ENCODE measurements at regions of chr19 and their contacts with region 1.

Region 1: GRCh38 chr19:5665796-5666513 is 14.4 kb downstream of the MICOS13 start:
- DNase-seq: peak in 2 of 7 donors; percentile 69 to 77
- H3K4me3 ChIP-seq: no peak overlapping the region
- H3K27ac ChIP-seq: peak overlapping the region in 3 of 5 donors; percentile 17 to 40 (median 24)
- H3K4me1 ChIP-seq: peaks cover 0 to 9% of the 10 kb centered on the region in 2 donors
- H3K27me3 ChIP-seq: no peaks in the 10 kb centered on the region
- CTCF ChIP-seq: peak in 5 of 6 experiments; percentile 8 to 42 (median 31)
- POLR2A ChIP-seq: no peak

Region 2: GRCh38 chr19:5615756-5616332 is 50.1 kb before region 1 on chr19:
- intact Hi-C with region 1: loop called in 1 of 2 experiments (anchors 10 kb)
- DNase-seq: no peak
- H3K4me3 ChIP-seq: no peak overlapping the region
- H3K27ac ChIP-seq: no peak overlapping the region
- H3K4me1 ChIP-seq: peaks cover 6 to 26% of the 10 kb centered on the region in 2 donors
- H3K27me3 ChIP-seq: no peaks in the 10 kb centered on the region
- CTCF ChIP-seq: no peak
- POLR2A ChIP-seq: no peak

Region 3: GRCh38 chr19:5719961-5720790 is 54.2 kb after region 1 on chr19 and contains the starts of genes CATSPERD and LONP1:
- intact Hi-C with region 1: no loop called
- DNase-seq: peak; percentile 98 to 99 (median 99)
- H3K4me3 ChIP-seq: peak within 1 kb of the TSS; percentile 12 to 92 (median 80)
- H3K27ac ChIP-seq: peak within 1 kb of the TSS; percentile 89 to 100 (median 96)
- H3K4me1 ChIP-seq: peaks cover 26 to 41% of the 10 kb centered on the region in 2 donors
- H3K27me3 ChIP-seq: no peaks in the 10 kb centered on the region
- CTCF ChIP-seq: peak; percentile 85 to 97 (median 96)
- POLR2A ChIP-seq: peak; percentile 82 to 98
- total RNA-seq, gene CATSPERD: not detected
- total RNA-seq, gene LONP1: 185 to 523 (median 396) TPM